ENCODE measurements at regions of chr14 and their contacts with region 1.

Region 1: DNA sequence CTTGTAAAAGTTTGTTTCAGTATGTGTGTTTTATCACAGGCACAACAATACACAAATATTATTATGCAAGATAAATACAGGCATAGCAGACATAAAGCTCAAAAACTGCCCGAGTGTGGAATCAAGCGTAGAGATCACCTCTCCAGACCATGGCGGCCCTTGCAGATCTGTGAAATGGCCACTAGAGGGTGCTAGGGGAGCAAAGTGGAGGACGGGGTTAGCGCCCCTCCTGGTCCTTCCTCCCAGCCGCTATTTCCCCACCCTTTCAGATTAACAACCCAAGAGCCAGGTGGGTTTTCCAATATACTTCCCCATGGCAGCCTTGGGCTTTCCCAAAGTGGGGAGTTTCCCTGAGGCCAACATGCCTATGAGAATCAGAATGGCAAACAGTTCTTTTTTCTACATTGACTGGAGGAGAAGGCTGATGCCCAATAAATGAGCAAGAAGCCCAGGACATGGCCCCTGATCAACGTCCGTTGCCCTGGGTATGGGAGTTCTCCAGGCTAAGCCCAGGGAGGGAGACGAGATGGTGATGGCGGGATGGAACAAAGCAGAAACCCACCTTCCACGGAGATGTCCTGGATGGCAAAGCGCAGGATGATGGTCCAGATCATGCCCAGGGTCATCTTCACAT is 67.4 kb downstream of the ACTN1 start:
- DNase-seq: peak; percentile 82
- H3K4me3 Mint-ChIP-seq: no peak overlapping the region
- H3K27ac Mint-ChIP-seq: no peak overlapping the region
- H3K4me1 Mint-ChIP-seq: peaks cover 26% of the 10 kb centered on the region
- H3K27me3 Mint-ChIP-seq: no peaks in the 10 kb centered on the region

Region 2: DNA sequence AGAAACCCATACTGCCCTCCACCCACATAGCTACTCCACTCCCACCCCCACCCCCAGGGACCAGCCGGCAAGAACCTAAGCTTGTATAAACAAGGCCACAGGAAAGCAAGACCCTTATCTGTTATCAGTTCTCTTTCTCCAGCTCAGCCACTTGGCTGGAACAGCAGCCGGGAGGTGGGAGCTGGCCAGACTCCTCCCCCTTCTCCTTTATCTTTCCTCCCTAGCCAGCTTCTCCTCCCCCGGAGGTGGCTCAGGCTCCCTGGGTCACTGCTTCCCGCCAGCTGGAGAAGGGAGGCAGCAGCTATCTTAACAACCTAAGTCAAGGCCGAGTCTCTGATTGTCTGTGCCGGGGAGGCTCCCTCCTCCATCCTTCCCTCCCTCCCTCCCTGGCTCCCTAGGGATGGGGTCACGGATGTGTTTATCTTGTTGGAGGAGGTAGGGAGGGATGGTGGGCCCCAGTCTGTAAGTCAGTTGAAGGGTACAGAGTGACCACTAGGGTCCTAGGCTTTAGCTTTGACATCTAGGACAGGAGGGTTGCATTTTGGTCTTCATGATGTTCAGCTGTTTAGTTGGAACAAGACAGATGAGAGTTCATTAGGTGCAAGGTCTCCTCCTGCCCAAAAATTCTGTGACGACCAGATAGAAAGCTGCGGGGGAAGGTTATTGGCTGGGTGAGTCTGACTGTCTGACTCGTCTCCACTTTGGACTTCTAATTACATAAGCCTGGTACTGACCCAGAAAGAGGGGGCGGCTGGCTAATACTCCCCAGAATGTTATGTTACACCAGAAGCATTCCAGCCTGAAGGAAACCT is 148.6 kb before region 1 on chr14:
- CTCF ChIA-PET with region 1: no interaction called
- POLR2A ChIA-PET with region 1: no interaction called
- intact Hi-C with region 1: no loop called
- DNase-seq: no peak
- H3K4me3 Mint-ChIP-seq: no peak overlapping the region
- H3K27ac Mint-ChIP-seq: no peak overlapping the region
- H3K4me1 Mint-ChIP-seq: peaks cover 24% of the 10 kb centered on the region
- H3K27me3 Mint-ChIP-seq: no peaks in the 10 kb centered on the region

Region 3: GRCh38 chr14:68898248-68899032 is 13.3 kb before region 1 on chr14:
- CTCF ChIA-PET with region 1: interaction called, 13 read pairs
- POLR2A ChIA-PET with region 1: no interaction called
- intact Hi-C with region 1: no loop called
- DNase-seq: no peak
- H3K4me3 Mint-ChIP-seq: no peak overlapping the region
- H3K27ac Mint-ChIP-seq: no peak overlapping the region
- H3K4me1 Mint-ChIP-seq: peaks cover 12% of the 10 kb centered on the region
- H3K27me3 Mint-ChIP-seq: no peaks in the 10 kb centered on the region

Region 4: GRCh38 chr14:68939893-68940613 is 28.3 kb after region 1 on chr14:
- CTCF ChIA-PET with region 1: interaction called, 11 read pairs
- POLR2A ChIA-PET with region 1: no interaction called
- intact Hi-C with region 1: no loop called
- DNase-seq: no peak
- H3K4me3 Mint-ChIP-seq: no peak overlapping the region
- H3K27ac Mint-ChIP-seq: no peak overlapping the region
- H3K4me1 Mint-ChIP-seq: peaks cover 19% of the 10 kb centered on the region
- H3K27me3 Mint-ChIP-seq: no peaks in the 10 kb centered on the region

Region 5: GRCh38 chr14:69002069-69002468 is 90.4 kb after region 1 on chr14:
- CTCF ChIA-PET with region 1: interaction called, 28 read pairs
- POLR2A ChIA-PET with region 1: no interaction called
- intact Hi-C with region 1: no loop called
- DNase-seq: no peak
- H3K4me3 Mint-ChIP-seq: no peak overlapping the region
- H3K27ac Mint-ChIP-seq: no peak overlapping the region
- H3K4me1 Mint-ChIP-seq: peaks cover 2% of the 10 kb centered on the region
- H3K27me3 Mint-ChIP-seq: no peaks in the 10 kb centered on the region

Region 6: GRCh38 chr14:69090187-69090789 is 178.6 kb after region 1 on chr14:
- CTCF ChIA-PET with region 1: interaction called, 53 read pairs
- POLR2A ChIA-PET with region 1: no interaction called
- intact Hi-C with region 1: loop called (anchors 1 kb)
- DNase-seq: peak; percentile 27
- H3K4me3 Mint-ChIP-seq: no peak overlapping the region
- H3K27ac Mint-ChIP-seq: no peak overlapping the region
- H3K4me1 Mint-ChIP-seq: peaks cover 7% of the 10 kb centered on the region
- H3K27me3 Mint-ChIP-seq: no peaks in the 10 kb centered on the region

Region 7: GRCh38 chr14:69107407-69108003 is 195.8 kb after region 1 on chr14:
- CTCF ChIA-PET with region 1: interaction called, 54 read pairs
- POLR2A ChIA-PET with region 1: no interaction called
- intact Hi-C with region 1: loop called (anchors 1 kb)
- DNase-seq: peak; percentile 26
- H3K4me3 Mint-ChIP-seq: no peak overlapping the region
- H3K27ac Mint-ChIP-seq: no peak overlapping the region
- H3K4me1 Mint-ChIP-seq: peaks cover under 1% of the 10 kb centered on the region
- H3K27me3 Mint-ChIP-seq: no peaks in the 10 kb centered on the region

Measured in activated CD4-positive, alpha-beta memory T cell treated with anti-CD3 and anti-CD28 coated beads for 36 hours (primary cell).